CD4-positive, alpha-beta memory T cell (primary cell): ENCODE measurements at regions of chr15 and their contacts with region 1.

Region 1: GRCh38 chr15:75023181-75023871 is at the start of gene PPCDC:
- DNase-seq: peak; percentile 91 to 94 (median 92)
- H3K4me3 ChIP-seq: peak within 1 kb of the TSS; percentile 95 to 100
- H3K4me3 Mint-ChIP-seq: peak within 1 kb of the TSS; percentile 92 to 99 (median 96)
- H3K27ac ChIP-seq: peak within 1 kb of the TSS; percentile 76
- H3K27ac Mint-ChIP-seq: peak within 1 kb of the TSS; percentile 71 to 97 (median 93)
- H3K4me1 ChIP-seq: peaks cover 20% of the 10 kb centered on the region
- H3K4me1 Mint-ChIP-seq: peaks cover 11 to 28% (median 18%) of the 10 kb centered on the region in 4 donors
- H3K27me3 ChIP-seq: no peaks in the 10 kb centered on the region
- H3K27me3 Mint-ChIP-seq: no peaks in the 10 kb centered on the region
- total RNA-seq, gene PPCDC: 14.1 to 15.2 TPM

Region 2: DNA sequence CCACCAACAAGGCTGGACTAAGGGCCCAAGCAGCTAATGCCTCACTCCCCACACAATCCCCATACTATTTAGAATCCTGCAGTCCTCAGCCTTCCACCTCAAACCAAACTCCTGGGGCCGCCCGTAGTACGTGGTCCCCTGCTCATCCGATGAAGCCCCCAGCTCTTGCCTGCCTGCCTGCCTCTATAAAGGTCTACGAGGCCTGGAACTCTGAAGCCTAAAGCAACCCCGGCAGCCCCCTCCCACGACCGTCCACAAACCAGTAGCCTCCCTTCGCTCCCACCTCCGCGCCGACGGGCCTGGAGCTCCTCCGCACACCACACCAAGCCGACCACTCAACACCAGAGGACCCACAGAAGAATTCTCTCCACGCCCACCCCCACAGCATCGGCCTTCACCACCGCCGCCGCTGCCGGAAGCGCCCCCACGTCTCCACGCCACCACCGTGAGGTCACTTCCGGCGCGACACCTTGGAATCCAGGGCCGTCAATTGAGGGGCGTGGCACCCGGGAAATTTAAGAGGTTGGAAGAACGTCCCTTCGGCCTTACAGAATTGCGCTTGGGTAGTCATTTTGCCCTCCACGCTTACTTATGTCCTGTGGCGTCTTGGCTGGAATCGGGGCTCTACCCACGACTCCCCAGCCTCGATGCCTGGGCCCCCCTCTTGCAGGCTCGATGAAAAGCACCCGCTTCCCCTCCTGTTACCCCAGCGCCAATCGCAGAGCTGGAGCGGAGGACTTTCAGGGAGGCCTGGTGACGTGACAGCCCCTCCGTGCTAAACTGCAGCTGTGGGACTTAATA is 327.5 kb before region 1 on chr15 and contains the start of gene EDC3:
- CTCF ChIA-PET with region 1: no interaction called
- POLR2A ChIA-PET with region 1: no interaction called
- intact Hi-C with region 1: loop called (anchors 5 kb)
- DNase-seq: peak; percentile 83 to 90 (median 84)
- H3K4me3 ChIP-seq: peak within 1 kb of the TSS; percentile 80 to 96
- H3K4me3 Mint-ChIP-seq: peak within 1 kb of the TSS; percentile 97 to 100 (median 100)
- H3K27ac ChIP-seq: peak within 1 kb of the TSS; percentile 70
- H3K27ac Mint-ChIP-seq: peak within 1 kb of the TSS; percentile 93 to 100 (median 99)
- H3K4me1 ChIP-seq: peaks cover 31% of the 10 kb centered on the region
- H3K4me1 Mint-ChIP-seq: peaks cover 30 to 49% (median 39%) of the 10 kb centered on the region in 4 donors
- H3K27me3 ChIP-seq: no peaks in the 10 kb centered on the region
- H3K27me3 Mint-ChIP-seq: no peaks in the 10 kb centered on the region
- total RNA-seq, gene EDC3: 40.6 to 40.7 TPM

Region 3: DNA sequence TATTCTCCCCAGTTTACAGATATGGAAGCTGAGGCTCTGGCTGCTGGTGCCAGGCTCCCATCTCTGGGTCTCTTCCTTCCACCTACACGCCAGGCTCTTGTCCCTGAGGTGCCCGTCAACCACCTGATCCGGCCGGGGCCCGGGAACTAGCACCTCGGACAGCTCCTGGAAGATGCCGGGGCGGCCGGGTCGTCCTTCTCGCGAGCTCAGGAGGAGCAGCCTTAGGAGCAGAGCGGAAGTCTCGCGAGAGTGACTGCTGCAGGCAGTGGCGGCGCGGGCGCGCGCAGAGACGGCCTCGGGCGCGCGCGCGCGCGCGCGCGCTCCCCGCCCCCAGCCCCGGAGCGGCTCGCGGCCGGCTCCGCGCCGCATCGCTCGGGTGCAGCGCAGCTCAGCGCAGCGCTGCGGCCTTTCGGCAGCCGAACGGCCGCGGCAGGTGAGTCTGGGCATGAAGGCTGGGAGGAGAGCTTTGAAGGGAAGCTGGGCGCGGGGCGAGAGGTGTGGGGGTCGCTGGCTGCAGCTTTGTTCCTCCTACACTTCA is 28.0 kb before region 1 on chr15 and contains the start of gene SCAMP5:
- CTCF ChIA-PET with region 1: no interaction called
- POLR2A ChIA-PET with region 1: interaction called, 5 read pairs
- intact Hi-C with region 1: loop called (anchors 2 kb)
- DNase-seq: peak; percentile 90 to 93 (median 90)
- H3K4me3 ChIP-seq: peak within 1 kb of the TSS; percentile 47 to 74
- H3K4me3 Mint-ChIP-seq: peak within 1 kb of the TSS; percentile 76 to 92 (median 84)
- H3K27ac ChIP-seq: no peak within 1 kb of the TSS
- H3K27ac Mint-ChIP-seq: peak within 1 kb of the TSS in 4 of 7 donors; percentile 29 to 86 (median 74)
- H3K4me1 ChIP-seq: peaks cover 17% of the 10 kb centered on the region
- H3K4me1 Mint-ChIP-seq: peaks cover 9 to 16% (median 14%) of the 10 kb centered on the region in 4 donors
- H3K27me3 ChIP-seq: peaks cover 8% of the 10 kb centered on the region
- H3K27me3 Mint-ChIP-seq: peaks cover 16 to 28% of the 10 kb centered on the region in 2 donors
- total RNA-seq, gene SCAMP5: 0.26 to 0.33 TPM

Region 4: DNA sequence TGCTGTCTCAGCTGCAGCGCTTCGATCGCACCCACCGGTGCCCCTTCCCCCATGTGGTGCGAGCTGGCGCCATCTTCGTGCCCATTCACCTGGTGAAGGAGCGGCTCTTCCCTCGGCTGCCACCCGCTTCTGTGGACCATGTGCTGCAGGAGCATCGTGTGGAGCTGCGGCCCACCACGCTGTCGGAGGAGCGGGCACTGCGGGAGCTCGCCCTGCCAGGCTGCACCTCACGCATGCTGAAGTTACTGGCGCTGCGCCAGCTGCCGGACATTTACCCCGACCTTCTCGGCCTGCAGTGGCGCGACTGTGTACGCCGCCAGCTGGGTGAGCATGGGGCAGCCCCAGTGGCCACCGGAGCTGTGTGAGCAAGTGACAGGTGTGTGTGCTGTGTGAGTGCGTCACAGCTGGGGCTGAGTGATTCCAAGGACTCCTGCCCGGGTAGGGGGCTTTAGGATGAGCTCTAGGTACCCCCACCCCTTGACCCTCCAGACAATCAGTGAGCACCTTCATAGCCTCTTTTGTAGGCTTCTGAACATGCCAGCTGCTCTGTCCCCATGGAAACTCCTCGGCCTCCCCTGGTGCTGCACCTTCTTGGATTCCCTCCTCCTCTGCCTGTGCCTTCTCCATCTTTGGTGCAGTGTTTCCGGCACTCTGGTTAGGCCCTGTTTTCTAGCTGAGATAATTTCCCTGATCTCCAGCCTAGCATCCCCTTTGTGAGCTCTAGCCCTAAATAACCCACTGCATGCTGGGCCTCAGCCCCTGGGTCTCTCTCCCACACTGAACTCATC is 185.4 kb after region 1 on chr15:
- CTCF ChIA-PET with region 1: interaction called, 126 read pairs
- POLR2A ChIA-PET with region 1: interaction called, 19 read pairs
- intact Hi-C with region 1: loop called (anchors 1 kb)
- DNase-seq: no peak
- H3K4me3 ChIP-seq: no peak overlapping the region
- H3K4me3 Mint-ChIP-seq: no peak overlapping the region
- H3K27ac ChIP-seq: no peak overlapping the region
- H3K27ac Mint-ChIP-seq: peak overlapping the region in 3 of 7 donors; percentile 14 to 79 (median 68)
- H3K4me1 ChIP-seq: peaks cover 27% of the 10 kb centered on the region
- H3K4me1 Mint-ChIP-seq: peaks cover 17 to 48% (median 31%) of the 10 kb centered on the region in 4 donors
- H3K27me3 ChIP-seq: no peaks in the 10 kb centered on the region
- H3K27me3 Mint-ChIP-seq: no peaks in the 10 kb centered on the region

Region 5: DNA sequence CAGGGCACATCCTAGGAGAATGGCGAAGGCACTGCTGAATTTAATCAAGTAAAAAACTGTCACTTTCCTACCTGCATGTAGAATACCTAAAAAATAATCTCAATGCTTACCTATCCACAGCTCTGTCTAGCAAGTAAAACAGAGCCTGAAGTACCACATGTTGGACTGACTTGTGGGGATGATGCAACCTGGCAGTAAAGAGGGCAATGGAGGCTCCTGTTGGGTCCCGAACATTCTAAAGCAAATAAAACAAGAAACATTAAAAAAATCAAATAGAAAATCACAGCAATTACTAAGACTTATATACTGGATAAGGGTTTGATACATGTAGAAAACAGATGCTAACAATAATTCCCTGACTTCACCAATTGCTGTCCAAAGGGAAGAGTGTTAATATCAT is 499.7 kb after region 1 on chr15:
- CTCF ChIA-PET with region 1: no interaction called
- POLR2A ChIA-PET with region 1: no interaction called
- intact Hi-C with region 1: no loop called
- DNase-seq: no peak
- H3K4me3 ChIP-seq: no peak overlapping the region
- H3K4me3 Mint-ChIP-seq: no peak overlapping the region
- H3K27ac ChIP-seq: no peak overlapping the region
- H3K27ac Mint-ChIP-seq: peak overlapping the region in 1 of 7 donors; percentile 17
- H3K4me1 ChIP-seq: no peaks in the 10 kb centered on the region
- H3K4me1 Mint-ChIP-seq: peaks cover 0 to 2% (median 0%) of the 10 kb centered on the region in 4 donors
- H3K27me3 ChIP-seq: no peaks in the 10 kb centered on the region
- H3K27me3 Mint-ChIP-seq: no peaks in the 10 kb centered on the region